Naive thymus-derived CD4-positive, alpha-beta T cell (primary cell): ENCODE measurements at regions of chr7 and their contacts with region 1.

Region 1: GRCh38 chr7:140479062-140479738 is at the start of gene MKRN1:
- DNase-seq: peak; percentile 87 to 93 (median 92)
- ATAC-seq: peak; percentile 93
- H3K4me3 ChIP-seq: peak within 1 kb of the TSS; percentile 84
- H3K4me3 Mint-ChIP-seq: peak within 1 kb of the TSS; percentile 90 to 100 (median 98)
- H3K27ac ChIP-seq: peak within 1 kb of the TSS; percentile 89
- H3K27ac Mint-ChIP-seq: peak within 1 kb of the TSS; percentile 92 to 99 (median 99)
- H3K4me1 ChIP-seq: peaks cover 21 to 28% of the 10 kb centered on the region in 2 donors
- H3K4me1 Mint-ChIP-seq: peaks cover 13 to 35% (median 25%) of the 10 kb centered on the region in 7 donors
- H3K27me3 ChIP-seq: no peaks in the 10 kb centered on the region
- H3K27me3 Mint-ChIP-seq: peaks cover 0 to 15% (median 0%) of the 10 kb centered on the region in 5 donors
- total RNA-seq, gene MKRN1: 85.1 to 162 (median 144) TPM

Region 2: DNA sequence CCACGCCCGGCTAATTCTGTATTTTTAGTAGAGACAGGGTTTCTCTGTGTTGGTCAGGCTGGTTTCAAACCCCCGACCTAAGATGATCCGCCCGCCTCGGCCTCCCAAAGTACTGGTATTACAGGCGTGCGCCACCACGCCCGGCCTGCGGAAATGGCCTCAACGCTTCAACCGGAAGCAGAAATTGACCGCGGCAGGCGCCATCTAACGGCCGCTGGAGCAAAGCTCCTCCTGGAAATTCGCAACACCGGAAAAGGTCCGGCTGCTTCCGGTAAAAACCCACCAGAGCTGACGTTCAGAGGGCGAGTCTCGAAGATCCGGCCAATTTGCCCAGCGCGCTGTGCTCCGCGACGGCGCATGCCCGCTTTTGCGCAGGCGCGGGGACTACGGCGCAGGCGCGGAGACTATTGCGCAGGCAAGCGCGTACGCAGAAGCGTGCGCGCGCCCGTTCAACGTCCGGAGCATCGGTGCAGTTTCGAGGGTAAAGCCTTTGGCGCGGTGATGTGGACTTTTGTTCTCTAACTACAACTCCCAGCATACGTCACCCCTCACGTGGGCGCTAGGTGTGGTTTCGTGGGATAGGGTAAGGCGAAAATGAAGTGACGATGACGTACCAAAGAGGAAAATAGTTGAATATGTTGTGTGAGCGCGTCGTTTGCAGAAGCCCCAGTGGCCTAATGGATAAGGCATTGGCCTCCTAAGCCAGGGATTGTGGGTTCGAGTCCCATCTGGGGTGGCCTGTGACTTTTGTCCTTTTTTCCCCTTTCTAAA is 1139.0 kb before region 1 on chr7:
- CTCF ChIA-PET with region 1: no interaction called
- POLR2A ChIA-PET with region 1: no interaction called
- intact Hi-C with region 1: loop called (anchors 1 to 2 kb)
- DNase-seq: peak; percentile 93 to 100 (median 99)
- ATAC-seq: peak; percentile 89
- H3K4me3 ChIP-seq: peak overlapping the region; percentile 95
- H3K4me3 Mint-ChIP-seq: peak overlapping the region; percentile 93 to 100 (median 98)
- H3K27ac ChIP-seq: peak overlapping the region; percentile 100
- H3K27ac Mint-ChIP-seq: peak overlapping the region; percentile 98 to 100 (median 100)
- H3K4me1 ChIP-seq: peaks cover 11 to 13% of the 10 kb centered on the region in 2 donors
- H3K4me1 Mint-ChIP-seq: peaks cover 12 to 49% (median 38%) of the 10 kb centered on the region in 7 donors
- H3K27me3 ChIP-seq: no peaks in the 10 kb centered on the region
- H3K27me3 Mint-ChIP-seq: peaks cover 0 to 9% (median 5%) of the 10 kb centered on the region in 5 donors

Region 3: GRCh38 chr7:140230861-140231770 is 248.1 kb before region 1 on chr7:
- CTCF ChIA-PET with region 1: no interaction called
- POLR2A ChIA-PET with region 1: interaction called, 5 read pairs
- intact Hi-C with region 1: loop called (anchors 1 to 10 kb)
- DNase-seq: peak; percentile 13 to 73 (median 44)
- ATAC-seq: peak; percentile 30
- H3K4me3 ChIP-seq: peak overlapping the region; percentile 95
- H3K4me3 Mint-ChIP-seq: peak overlapping the region; percentile 84 to 99 (median 96)
- H3K27ac ChIP-seq: peak overlapping the region; percentile 91
- H3K27ac Mint-ChIP-seq: peak overlapping the region; percentile 95 to 100 (median 99)
- H3K4me1 ChIP-seq: peaks cover 16 to 21% of the 10 kb centered on the region in 2 donors
- H3K4me1 Mint-ChIP-seq: peaks cover 24 to 56% (median 51%) of the 10 kb centered on the region in 7 donors
- H3K27me3 ChIP-seq: no peaks in the 10 kb centered on the region
- H3K27me3 Mint-ChIP-seq: peaks cover 0 to 2% (median 0%) of the 10 kb centered on the region in 5 donors

Region 4: GRCh38 chr7:140403878-140404564 is 75.2 kb before region 1 on chr7 and contains the start of gene RAB19:
- CTCF ChIA-PET with region 1: no interaction called
- POLR2A ChIA-PET with region 1: interaction called, 4 read pairs
- intact Hi-C with region 1: loop called (anchors 1 kb)
- DNase-seq: peak; percentile 7 to 67 (median 56)
- ATAC-seq: peak; percentile 87
- H3K4me3 ChIP-seq: peak within 1 kb of the TSS; percentile 82
- H3K4me3 Mint-ChIP-seq: peak within 1 kb of the TSS; percentile 92 to 99 (median 97)
- H3K27ac ChIP-seq: peak within 1 kb of the TSS; percentile 87
- H3K27ac Mint-ChIP-seq: peak within 1 kb of the TSS; percentile 91 to 99 (median 96)
- H3K4me1 ChIP-seq: peaks cover 8 to 11% of the 10 kb centered on the region in 2 donors
- H3K4me1 Mint-ChIP-seq: peaks cover 13 to 42% (median 29%) of the 10 kb centered on the region in 7 donors
- H3K27me3 ChIP-seq: no peaks in the 10 kb centered on the region
- H3K27me3 Mint-ChIP-seq: peaks cover 0 to 3% (median 0%) of the 10 kb centered on the region in 5 donors
- total RNA-seq, gene RAB19: 1.8 to 13.3 (median 3.3) TPM

Region 5: GRCh38 chr7:140696680-140697446 is 217.7 kb after region 1 on chr7 and contains the start of gene NDUFB2:
- CTCF ChIA-PET with region 1: no interaction called
- POLR2A ChIA-PET with region 1: no interaction called
- intact Hi-C with region 1: loop called (anchors 1 kb)
- DNase-seq: peak; percentile 72 to 92 (median 90)
- ATAC-seq: peak; percentile 92
- H3K4me3 ChIP-seq: peak within 1 kb of the TSS; percentile 99
- H3K4me3 Mint-ChIP-seq: peak within 1 kb of the TSS; percentile 87 to 100 (median 98)
- H3K27ac ChIP-seq: peak within 1 kb of the TSS; percentile 88
- H3K27ac Mint-ChIP-seq: peak within 1 kb of the TSS; percentile 92 to 99 (median 98)
- H3K4me1 ChIP-seq: peaks cover 12 to 16% of the 10 kb centered on the region in 2 donors
- H3K4me1 Mint-ChIP-seq: peaks cover 18 to 50% (median 40%) of the 10 kb centered on the region in 7 donors
- H3K27me3 ChIP-seq: no peaks in the 10 kb centered on the region
- H3K27me3 Mint-ChIP-seq: no peaks in the 10 kb centered on the region
- total RNA-seq, gene NDUFB2: 88.3 to 184 (median 94.0) TPM

Region 6: GRCh38 chr7:141551094-141551781 is 1072.0 kb after region 1 on chr7 and contains the start of gene AGK:
- CTCF ChIA-PET with region 1: no interaction called
- POLR2A ChIA-PET with region 1: no interaction called
- intact Hi-C with region 1: loop called in 1 of 2 experiments (anchors 5 kb)
- DNase-seq: peak; percentile 61 to 83 (median 74)
- ATAC-seq: peak; percentile 96
- H3K4me3 ChIP-seq: peak within 1 kb of the TSS; percentile 89
- H3K4me3 Mint-ChIP-seq: peak within 1 kb of the TSS; percentile 83 to 99 (median 92)
- H3K27ac ChIP-seq: peak within 1 kb of the TSS; percentile 73
- H3K27ac Mint-ChIP-seq: peak within 1 kb of the TSS; percentile 52 to 96 (median 90)
- H3K4me1 ChIP-seq: peaks cover 12 to 17% of the 10 kb centered on the region in 2 donors
- H3K4me1 Mint-ChIP-seq: peaks cover 14 to 44% (median 40%) of the 10 kb centered on the region in 7 donors
- H3K27me3 ChIP-seq: no peaks in the 10 kb centered on the region
- H3K27me3 Mint-ChIP-seq: peaks cover 0 to 4% (median 0%) of the 10 kb centered on the region in 5 donors
- total RNA-seq, gene AGK: 24.3 to 58.8 (median 29.9) TPM